ENCODE measurements at regions of chr20 and their contacts with region 1.

Region 1: GRCh38 chr20:5205348-5206210 is 78.8 kb downstream of the CDS2 start:
- DNase-seq: peak; percentile 57 to 58
- H3K4me3 ChIP-seq: no peak overlapping the region
- H3K27ac ChIP-seq: no peak overlapping the region
- H3K4me1 ChIP-seq: no peaks in the 10 kb centered on the region
- H3K27me3 ChIP-seq: no peaks in the 10 kb centered on the region
- CTCF ChIP-seq: peak; percentile 61 to 76 (median 65)
- POLR2A ChIP-seq: no peak

Region 2: GRCh38 chr20:5282561-5282960 is 77.0 kb after region 1 on chr20:
- intact Hi-C with region 1: no loop called
- DNase-seq: no peak
- H3K4me3 ChIP-seq: no peak overlapping the region
- H3K27ac ChIP-seq: no peak overlapping the region
- H3K4me1 ChIP-seq: no peaks in the 10 kb centered on the region
- H3K27me3 ChIP-seq: no peaks in the 10 kb centered on the region
- CTCF ChIP-seq: no peak
- POLR2A ChIP-seq: no peak

Region 3: GRCh38 chr20:5448449-5449118 is 243.0 kb after region 1 on chr20:
- intact Hi-C with region 1: loop called (anchors 10 kb)
- DNase-seq: no peak
- H3K4me3 ChIP-seq: no peak overlapping the region
- H3K27ac ChIP-seq: no peak overlapping the region
- H3K4me1 ChIP-seq: no peaks in the 10 kb centered on the region
- H3K27me3 ChIP-seq: no peaks in the 10 kb centered on the region
- CTCF ChIP-seq: peak; percentile 14 to 43 (median 22)
- POLR2A ChIP-seq: no peak